Adrenal gland (tissue), 19 donors: ENCODE measurements at regions of chr1 and their contacts with region 1.

Region 1: GRCh38 chr1:30719406-30720270 is 3.7 kb downstream of the MATN1 start:
- DNase-seq: peak in 2 of 7 donors; percentile 39 to 77
- H3K4me3 ChIP-seq: peak overlapping the region in 1 of 4 donors; percentile 49
- H3K27ac ChIP-seq: peak overlapping the region in 4 of 5 donors; percentile 96 to 99 (median 99)
- H3K4me1 ChIP-seq: peaks cover 7 to 10% of the 10 kb centered on the region in 2 donors
- H3K27me3 ChIP-seq: no peaks in the 10 kb centered on the region
- CTCF ChIP-seq: peak in 1 of 6 experiments; percentile 5
- POLR2A ChIP-seq: no peak

Region 2: DNA sequence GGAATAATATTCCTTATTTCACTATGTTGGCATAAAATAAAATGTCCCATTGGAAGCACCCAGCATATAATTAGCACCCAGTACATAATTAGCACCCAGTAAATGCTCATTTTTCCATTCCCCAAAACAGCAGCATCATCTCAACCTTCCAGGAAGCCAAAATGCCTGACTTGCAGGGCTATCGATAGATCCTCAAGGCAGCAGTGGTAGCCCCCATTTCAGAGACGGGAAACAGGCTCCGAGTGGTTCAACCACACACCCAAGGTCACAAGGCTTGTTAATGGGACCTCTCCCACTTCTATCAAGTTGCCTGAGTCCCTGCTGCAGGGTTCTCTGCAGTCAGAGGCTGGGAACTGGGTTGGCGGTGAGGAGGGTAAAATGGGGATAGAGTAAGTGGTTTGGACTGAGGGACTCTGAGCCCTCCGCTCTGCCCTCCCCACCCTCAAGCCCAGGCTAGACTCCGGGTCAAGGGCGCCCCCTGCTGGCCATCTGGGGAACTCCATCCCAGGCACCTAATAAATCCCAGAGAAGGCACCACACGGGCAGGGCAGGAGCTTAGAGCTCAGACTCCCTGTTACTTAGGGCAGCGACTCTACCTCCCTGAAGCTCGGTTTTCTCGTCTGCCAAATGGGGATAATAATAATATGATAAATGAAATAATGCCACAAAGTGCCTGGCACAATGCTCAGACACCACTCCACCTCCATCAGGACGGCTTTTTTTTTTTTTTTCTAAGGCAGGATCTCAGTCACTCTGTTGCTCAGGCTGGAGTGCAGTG is 59.8 kb after region 1 on chr1:
- intact Hi-C with region 1: loop called (anchors 2 to 5 kb)
- DNase-seq: peak; percentile 76 to 95 (median 88)
- H3K4me3 ChIP-seq: no peak overlapping the region
- H3K27ac ChIP-seq: no peak overlapping the region
- H3K4me1 ChIP-seq: peaks cover 14 to 16% of the 10 kb centered on the region in 2 donors
- H3K27me3 ChIP-seq: no peaks in the 10 kb centered on the region
- CTCF ChIP-seq: peak; percentile 97 to 99 (median 98)
- POLR2A ChIP-seq: no peak